Adrenal gland (tissue), 19 donors: ENCODE measurements at regions of chr17 and their contacts with region 1.

Region 1: GRCh38 chr17:46995841-46996571 is 17.0 kb upstream of the RPRML start:
- DNase-seq: no peak
- H3K4me3 ChIP-seq: no peak overlapping the region
- H3K27ac ChIP-seq: no peak overlapping the region
- H3K4me1 ChIP-seq: no peaks in the 10 kb centered on the region
- H3K27me3 ChIP-seq: no peaks in the 10 kb centered on the region
- CTCF ChIP-seq: no peak
- POLR2A ChIP-seq: no peak

Region 2: GRCh38 chr17:46841561-46842379 is 154.2 kb before region 1 on chr17:
- intact Hi-C with region 1: loop called in 1 of 2 experiments (anchors 10 kb)
- DNase-seq: peak in 2 of 7 donors; percentile 31 to 32
- H3K4me3 ChIP-seq: peak overlapping the region in 1 of 4 donors; percentile 26
- H3K27ac ChIP-seq: no peak overlapping the region
- H3K4me1 ChIP-seq: peaks cover 0 to 8% of the 10 kb centered on the region in 2 donors
- H3K27me3 ChIP-seq: peaks cover 14% of the 10 kb centered on the region
- CTCF ChIP-seq: peak; percentile 28 to 79 (median 49)
- POLR2A ChIP-seq: no peak

Region 3: DNA sequence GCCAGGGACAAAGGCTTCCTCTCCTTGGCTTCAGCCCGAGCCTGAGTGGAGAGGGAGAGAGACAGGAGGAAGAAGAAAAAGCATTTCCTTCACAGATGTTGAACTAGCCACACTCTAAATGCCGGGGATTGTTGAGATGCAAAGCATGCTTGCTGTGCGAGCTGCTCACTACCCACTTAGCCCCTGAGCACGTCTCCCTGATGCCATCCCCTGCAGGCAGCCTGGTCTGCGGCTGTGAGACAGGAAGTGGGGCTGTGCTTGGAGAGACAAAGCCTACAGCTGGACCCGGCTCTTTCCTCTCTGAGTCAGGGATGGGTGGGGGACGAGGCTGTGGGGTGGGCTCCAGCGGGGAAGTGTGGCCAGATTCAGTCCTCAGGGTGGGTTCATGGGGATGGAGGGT is 130.9 kb before region 1 on chr17:
- intact Hi-C with region 1: loop called in 1 of 2 experiments (anchors 10 kb)
- DNase-seq: no peak
- H3K4me3 ChIP-seq: no peak overlapping the region
- H3K27ac ChIP-seq: no peak overlapping the region
- H3K4me1 ChIP-seq: no peaks in the 10 kb centered on the region
- H3K27me3 ChIP-seq: peaks cover 3% of the 10 kb centered on the region
- CTCF ChIP-seq: no peak
- POLR2A ChIP-seq: no peak